Activated T-helper 2 cell treated with anti-CD3 and anti-CD28 coated beads, Interferon-gamma antibody, Interleukin-2, Interleukin-4, amounts not matched to agents 10 μg/mL and 5 μg/mL and 100 μg/mL, durations not matched to agents 14 hours and 24 hours and 36 hours (primary cell): ENCODE measurements at regions of chrX and their contacts with region 1.

Region 1: GRCh38 chrX:77910108-77910840 is at the start of gene ATP7A:
- DNase-seq: peak; percentile 86
- H3K4me3 Mint-ChIP-seq: peak within 1 kb of the TSS; percentile 93
- H3K27ac Mint-ChIP-seq: peak within 1 kb of the TSS; percentile 97
- H3K4me1 Mint-ChIP-seq: peaks cover 9% of the 10 kb centered on the region
- H3K27me3 Mint-ChIP-seq: no peaks in the 10 kb centered on the region
- total RNA-seq, gene ATP7A: 6.2 and 6.6 TPM in 2 replicates

Region 2: DNA sequence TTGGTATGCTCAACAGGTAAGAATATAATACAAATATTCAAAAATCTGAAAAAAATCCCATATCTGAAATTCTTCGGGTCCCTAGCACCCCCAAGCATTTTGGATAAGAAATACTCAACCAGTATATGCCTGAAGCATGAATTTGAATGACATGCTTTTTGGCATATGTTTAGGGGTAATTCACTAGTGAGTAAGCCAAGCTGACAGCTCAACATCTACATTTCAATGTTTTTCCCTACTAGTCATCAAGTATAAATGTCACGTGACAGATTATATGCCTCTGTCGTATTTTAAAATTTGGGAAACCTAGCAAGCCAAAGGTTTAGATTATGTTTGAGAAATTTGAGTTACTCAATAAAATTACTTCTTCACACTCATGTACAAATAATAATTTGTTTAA is 338.0 kb before region 1 on chrX:
- intact Hi-C with region 1: no loop called
- DNase-seq: no peak
- H3K4me3 Mint-ChIP-seq: no peak overlapping the region
- H3K27ac Mint-ChIP-seq: no peak overlapping the region
- H3K4me1 Mint-ChIP-seq: no peaks in the 10 kb centered on the region
- H3K27me3 Mint-ChIP-seq: no peaks in the 10 kb centered on the region

Region 3: DNA sequence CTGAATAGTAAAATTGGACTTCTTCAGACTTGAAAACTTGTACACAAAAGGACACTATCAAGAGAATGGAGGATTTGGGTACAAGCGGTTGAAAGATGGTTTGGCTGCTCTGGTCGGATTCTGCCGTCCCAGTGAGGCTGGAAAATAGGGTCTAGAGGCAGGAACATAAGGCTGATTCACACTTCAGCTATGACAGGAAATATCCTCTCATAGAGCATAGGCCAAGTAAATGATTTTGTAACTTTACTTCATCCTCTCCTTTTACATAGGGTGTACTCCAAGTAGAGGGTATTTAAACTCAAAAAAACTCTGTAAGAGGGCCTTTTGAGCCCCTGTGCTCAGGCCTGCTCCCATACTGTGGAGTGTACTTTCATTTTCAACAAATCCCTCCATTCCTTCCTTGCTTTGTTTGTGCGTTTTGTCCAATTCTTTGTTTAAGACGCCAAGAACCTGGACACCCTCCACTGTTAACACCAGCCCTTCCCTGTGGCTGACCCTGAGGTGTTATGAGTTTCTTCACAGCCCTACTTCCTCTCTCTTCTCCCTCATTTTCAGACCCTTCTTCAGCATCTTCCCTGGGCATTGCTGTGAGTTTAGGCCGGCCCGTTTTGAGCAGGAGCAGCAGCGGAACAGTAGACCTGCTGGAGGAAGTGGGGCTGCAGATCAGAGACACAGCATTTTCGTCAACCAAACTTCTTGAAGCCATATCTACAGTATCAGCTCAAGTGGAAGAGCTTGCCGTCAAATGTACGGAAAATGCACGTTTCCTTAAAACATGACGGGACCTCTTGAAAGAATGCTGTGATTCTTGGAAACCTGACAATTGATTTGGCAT is 52.0 kb after region 1 on chrX:
- intact Hi-C with region 1: loop called (anchors 2 kb)
- DNase-seq: no peak
- H3K4me3 Mint-ChIP-seq: peak overlapping the region; percentile 70
- H3K27ac Mint-ChIP-seq: peak overlapping the region; percentile 93
- H3K4me1 Mint-ChIP-seq: peaks cover 23% of the 10 kb centered on the region
- H3K27me3 Mint-ChIP-seq: no peaks in the 10 kb centered on the region

Region 4: DNA sequence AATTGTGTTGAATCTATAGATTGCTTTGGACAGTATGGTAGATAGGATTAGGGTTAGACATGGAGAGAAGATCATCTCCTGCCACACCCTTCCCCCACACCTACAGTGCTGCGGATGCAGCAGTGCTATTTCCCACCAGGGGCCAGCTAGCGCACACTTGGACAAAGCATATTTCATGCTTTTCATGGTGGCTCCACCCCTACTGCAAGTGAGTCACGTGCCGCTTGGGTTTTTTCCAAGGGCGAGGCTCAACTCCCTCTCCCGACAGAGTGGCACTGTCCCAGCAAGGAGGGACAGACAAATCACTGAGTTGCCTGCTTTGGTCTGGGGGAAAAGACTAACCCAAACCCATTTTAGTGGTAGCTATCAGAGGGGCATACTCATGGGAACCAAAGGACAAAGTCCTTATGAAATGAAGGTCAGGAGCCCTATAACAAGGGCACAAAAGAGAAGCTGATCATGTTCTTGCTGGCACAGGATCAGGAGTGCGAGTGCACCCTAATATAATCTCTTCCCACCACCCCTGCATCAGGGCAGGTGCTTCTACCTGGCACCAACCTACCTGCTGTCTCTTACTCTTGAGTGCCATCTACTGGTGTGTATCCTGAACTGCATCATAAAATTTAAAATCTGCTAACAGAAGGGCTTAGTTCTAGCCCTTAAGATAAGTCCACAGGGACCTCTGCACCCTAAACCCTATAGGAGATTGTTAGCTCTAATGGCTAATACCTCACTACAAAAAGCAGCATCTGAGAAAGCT is 114.3 kb after region 1 on chrX:
- intact Hi-C with region 1: loop called (anchors 2 kb)
- DNase-seq: no peak
- H3K4me3 Mint-ChIP-seq: no peak overlapping the region
- H3K27ac Mint-ChIP-seq: no peak overlapping the region
- H3K4me1 Mint-ChIP-seq: no peaks in the 10 kb centered on the region
- H3K27me3 Mint-ChIP-seq: no peaks in the 10 kb centered on the region

Region 5: GRCh38 chrX:78048052-78048451 is 137.8 kb after region 1 on chrX:
- intact Hi-C with region 1: no loop called
- DNase-seq: no peak
- H3K4me3 Mint-ChIP-seq: no peak overlapping the region
- H3K27ac Mint-ChIP-seq: no peak overlapping the region
- H3K4me1 Mint-ChIP-seq: no peaks in the 10 kb centered on the region
- H3K27me3 Mint-ChIP-seq: no peaks in the 10 kb centered on the region